ENCODE measurements at regions of chr11 and their contacts with region 1.

Region 1: GRCh38 chr11:65961232-65961901 is at the start of gene SART1:
- DNase-seq: peak; percentile 94
- H3K4me3 ChIP-seq: peak within 1 kb of the TSS; percentile 58 to 98 (median 65)
- H3K27ac ChIP-seq: peak within 1 kb of the TSS; percentile 71
- H3K4me1 ChIP-seq: peaks cover 10% of the 10 kb centered on the region
- H3K27me3 ChIP-seq: no peaks in the 10 kb centered on the region
- CTCF ChIP-seq: no peak
- total RNA-seq, gene SART1: 16.5 to 50.7 TPM

Region 2: GRCh38 chr11:65888163-65888814 is 73.1 kb before region 1 on chr11 and contains the start of gene FIBP:
- CTCF ChIA-PET with region 1: no interaction called
- dilution Hi-C with region 1: no loop called
- in situ Hi-C with region 1: no loop called
- intact Hi-C with region 1: loop called (anchors 1 kb)
- DNase-seq: peak; percentile 95
- H3K4me3 ChIP-seq: peak within 1 kb of the TSS; percentile 78 to 89 (median 80)
- H3K27ac ChIP-seq: peak within 1 kb of the TSS; percentile 70
- H3K4me1 ChIP-seq: peaks cover 56% of the 10 kb centered on the region
- H3K27me3 ChIP-seq: no peaks in the 10 kb centered on the region
- CTCF ChIP-seq: peak; percentile 30 to 80
- total RNA-seq, gene FIBP: 84.1 to 125 TPM

Region 3: DNA sequence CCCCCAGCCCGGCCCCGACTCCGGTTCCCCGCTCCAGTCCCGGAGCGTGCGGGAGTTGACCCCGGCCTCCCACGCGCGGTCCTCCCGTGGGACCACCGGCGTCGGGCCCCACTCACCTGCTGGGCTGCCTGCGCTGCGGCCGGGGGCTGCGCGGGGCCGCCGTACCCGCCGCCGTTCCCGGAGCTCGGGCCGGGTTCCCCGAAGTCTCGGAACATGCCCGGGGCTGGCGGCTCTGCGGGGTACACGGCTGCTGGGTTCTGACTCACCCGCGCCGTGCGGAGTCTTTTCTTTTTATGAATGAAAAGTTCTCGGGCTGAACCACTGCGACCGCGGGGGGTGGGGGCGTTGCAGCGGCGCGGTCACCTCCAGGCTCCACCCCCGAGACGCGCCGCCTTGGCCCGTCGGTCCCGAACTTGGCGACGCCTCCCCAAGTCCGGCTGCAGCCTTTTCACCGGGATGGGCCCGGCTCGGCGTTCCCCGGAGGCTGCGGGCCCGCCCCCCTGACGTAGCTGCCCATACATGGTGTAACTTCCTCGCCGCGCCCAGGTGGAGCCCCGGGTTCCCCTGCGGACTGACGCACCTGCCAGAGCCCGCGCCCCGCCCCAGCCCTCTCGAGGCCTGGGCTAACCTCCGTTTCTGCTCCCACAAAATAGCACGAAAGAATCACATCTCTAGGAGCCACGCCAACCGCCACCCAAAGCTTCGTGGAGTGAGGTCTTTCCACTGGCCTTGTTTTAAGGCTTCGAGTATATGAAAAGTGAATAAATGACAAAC is 61.1 kb before region 1 on chr11 and contains the start of gene FOSL1:
- CTCF ChIA-PET with region 1: no interaction called
- dilution Hi-C with region 1: no loop called
- in situ Hi-C with region 1: no loop called
- intact Hi-C with region 1: loop called (anchors 1 kb)
- DNase-seq: peak; percentile 99
- H3K4me3 ChIP-seq: peak within 1 kb of the TSS; percentile 68 to 88 (median 83)
- H3K27ac ChIP-seq: peak within 1 kb of the TSS; percentile 86
- H3K4me1 ChIP-seq: peaks cover 58% of the 10 kb centered on the region
- H3K27me3 ChIP-seq: no peaks in the 10 kb centered on the region
- CTCF ChIP-seq: no peak
- total RNA-seq, gene FOSL1: 12.5 to 275 TPM

Region 4: DNA sequence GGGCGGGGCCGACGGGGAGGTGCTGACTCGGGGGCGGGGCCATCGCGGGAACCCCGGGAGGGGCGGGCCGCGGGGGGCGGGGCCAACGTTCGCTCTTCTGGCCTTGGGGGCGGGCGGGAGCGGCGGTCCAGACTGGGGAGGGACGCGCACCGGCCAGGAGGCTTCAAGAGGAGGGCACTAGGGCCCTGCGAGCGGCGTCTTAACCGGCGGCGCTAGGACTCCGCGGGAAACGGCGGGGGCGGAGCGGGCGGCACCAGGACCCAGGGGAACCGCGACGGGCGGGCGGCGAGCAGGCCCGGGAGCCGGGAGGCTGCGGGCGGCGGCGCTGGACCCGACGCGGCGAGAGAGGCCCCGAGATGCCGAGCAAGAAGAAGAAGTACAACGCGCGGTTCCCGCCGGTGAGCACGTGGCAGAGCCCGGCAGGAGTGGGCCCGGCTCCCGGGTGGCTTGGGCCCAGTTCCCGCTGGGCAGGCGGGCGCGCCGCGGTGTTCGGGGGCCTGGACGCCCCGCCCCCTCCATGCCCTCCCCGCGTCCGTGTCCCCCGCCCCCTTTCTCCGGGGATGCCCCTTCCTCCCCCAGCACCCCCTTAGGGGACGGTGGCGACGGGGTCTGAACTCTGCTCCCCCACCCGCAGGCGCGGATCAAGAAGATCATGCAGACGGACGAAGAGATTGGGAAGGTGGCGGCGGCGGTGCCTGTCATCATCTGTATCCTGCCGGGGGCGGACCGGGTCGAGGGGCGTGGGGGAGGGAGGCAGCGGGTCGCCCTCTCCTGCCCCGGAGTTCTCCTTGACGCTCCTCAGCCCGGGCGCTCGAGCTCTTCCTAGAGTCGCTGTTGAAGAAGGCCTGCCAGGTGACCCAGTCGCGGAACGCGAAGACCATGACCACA is 42.0 kb before region 1 on chr11 and contains the start of gene DRAP1:
- CTCF ChIA-PET with region 1: no interaction called
- dilution Hi-C with region 1: no loop called
- in situ Hi-C with region 1: no loop called
- intact Hi-C with region 1: loop called (anchors 1 kb)
- DNase-seq: peak; percentile 97
- H3K4me3 ChIP-seq: peak within 1 kb of the TSS; percentile 66 to 83 (median 80)
- H3K27ac ChIP-seq: peak within 1 kb of the TSS; percentile 92
- H3K4me1 ChIP-seq: peaks cover 60% of the 10 kb centered on the region
- H3K27me3 ChIP-seq: no peaks in the 10 kb centered on the region
- CTCF ChIP-seq: no peak
- total RNA-seq, gene DRAP1: 121 to 396 TPM

Region 5: DNA sequence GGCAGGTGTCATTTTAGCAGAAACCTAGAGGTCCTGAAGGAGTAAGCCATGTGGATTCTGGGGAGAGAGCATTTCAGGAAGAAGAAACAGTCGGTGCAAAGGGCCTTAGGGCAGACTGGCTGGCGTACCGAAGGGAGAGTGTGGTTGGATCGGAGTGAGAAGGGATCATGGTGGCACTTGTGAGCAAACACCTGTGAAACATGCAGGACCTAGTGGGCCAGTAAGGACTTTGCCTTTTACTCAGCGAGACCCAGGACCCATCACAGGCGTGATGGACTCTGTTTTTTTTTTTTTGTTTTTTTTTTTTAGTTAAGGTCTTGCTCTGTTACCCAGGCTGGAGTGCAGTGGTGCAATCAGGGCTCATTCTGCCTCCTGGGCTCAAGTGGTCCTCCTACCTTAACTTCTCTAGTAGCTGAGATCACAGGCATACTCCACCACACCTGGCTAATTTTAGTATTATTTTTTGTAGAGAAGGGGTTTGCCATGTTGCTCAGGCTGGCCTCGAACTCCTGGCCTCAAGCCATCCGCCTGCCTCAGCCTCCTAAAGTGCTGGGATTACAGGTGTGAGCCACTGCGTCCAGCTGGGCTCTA is 19.6 kb before region 1 on chr11:
- CTCF ChIA-PET with region 1: no interaction called
- dilution Hi-C with region 1: no loop called
- in situ Hi-C with region 1: no loop called
- intact Hi-C with region 1: loop called (anchors 2 kb)
- DNase-seq: no peak
- H3K4me3 ChIP-seq: no peak overlapping the region
- H3K27ac ChIP-seq: no peak overlapping the region
- H3K4me1 ChIP-seq: peaks cover 12% of the 10 kb centered on the region
- H3K27me3 ChIP-seq: no peaks in the 10 kb centered on the region
- CTCF ChIP-seq: no peak

Region 6: GRCh38 chr11:65973439-65974110 is 12.2 kb after region 1 on chr11:
- CTCF ChIA-PET with region 1: no interaction called
- dilution Hi-C with region 1: no loop called
- in situ Hi-C with region 1: no loop called
- intact Hi-C with region 1: no loop called
- DNase-seq: peak; percentile 87
- H3K4me3 ChIP-seq: no peak overlapping the region
- H3K27ac ChIP-seq: no peak overlapping the region
- H3K4me1 ChIP-seq: peaks cover 10% of the 10 kb centered on the region
- H3K27me3 ChIP-seq: no peaks in the 10 kb centered on the region
- CTCF ChIP-seq: no peak

Region 7: DNA sequence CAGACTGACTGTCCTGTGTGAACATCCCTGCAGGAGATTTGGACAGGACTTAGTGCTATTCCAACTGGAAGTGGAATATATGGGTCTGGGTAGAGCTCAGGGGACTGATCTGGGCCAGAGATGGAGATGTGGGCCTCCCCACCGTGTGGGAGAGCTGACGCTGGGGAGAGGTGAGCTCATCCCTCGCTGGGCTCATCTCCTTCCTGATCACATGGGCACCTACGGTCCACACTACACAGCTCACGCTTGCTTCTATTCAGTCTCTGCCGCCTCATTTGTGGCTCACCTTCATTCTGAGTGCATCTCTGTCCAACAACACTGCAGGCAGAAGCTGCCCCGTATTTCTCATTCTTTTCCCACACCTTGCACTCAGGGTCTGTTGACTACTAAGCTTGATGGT is 290.4 kb after region 1 on chr11:
- CTCF ChIA-PET with region 1: no interaction called
- dilution Hi-C with region 1: no loop called
- in situ Hi-C with region 1: no loop called
- intact Hi-C with region 1: no loop called
- DNase-seq: no peak
- H3K4me3 ChIP-seq: no peak overlapping the region
- H3K27ac ChIP-seq: no peak overlapping the region
- H3K4me1 ChIP-seq: peaks cover 3% of the 10 kb centered on the region
- H3K27me3 ChIP-seq: no peaks in the 10 kb centered on the region
- CTCF ChIP-seq: no peak